ENCODE measurements at regions of chr1 and their contacts with region 1.

Region 1: GRCh38 chr1:203871107-203871875 is 9.9 kb downstream of the SNRPE start:
- DNase-seq: no peak
- ATAC-seq: peak; percentile 85
- H3K4me3 ChIP-seq: no peak overlapping the region
- H3K27ac ChIP-seq: peak overlapping the region; percentile 66
- H3K4me1 ChIP-seq: peaks cover 18% of the 10 kb centered on the region
- H3K27me3 ChIP-seq: no peaks in the 10 kb centered on the region
- CTCF ChIP-seq: peak; percentile 84

Region 2: GRCh38 chr1:203839059-203839458 is 32.2 kb before region 1 on chr1:
- CTCF ChIA-PET with region 1: no interaction called
- POLR2A ChIA-PET with region 1: no interaction called
- in situ Hi-C with region 1: no loop called
- intact Hi-C with region 1: no loop called
- DNase-seq: no peak
- ATAC-seq: no peak
- H3K4me3 ChIP-seq: no peak overlapping the region
- H3K27ac ChIP-seq: no peak overlapping the region
- H3K4me1 ChIP-seq: no peaks in the 10 kb centered on the region
- H3K27me3 ChIP-seq: no peaks in the 10 kb centered on the region
- CTCF ChIP-seq: no peak

Region 3: DNA sequence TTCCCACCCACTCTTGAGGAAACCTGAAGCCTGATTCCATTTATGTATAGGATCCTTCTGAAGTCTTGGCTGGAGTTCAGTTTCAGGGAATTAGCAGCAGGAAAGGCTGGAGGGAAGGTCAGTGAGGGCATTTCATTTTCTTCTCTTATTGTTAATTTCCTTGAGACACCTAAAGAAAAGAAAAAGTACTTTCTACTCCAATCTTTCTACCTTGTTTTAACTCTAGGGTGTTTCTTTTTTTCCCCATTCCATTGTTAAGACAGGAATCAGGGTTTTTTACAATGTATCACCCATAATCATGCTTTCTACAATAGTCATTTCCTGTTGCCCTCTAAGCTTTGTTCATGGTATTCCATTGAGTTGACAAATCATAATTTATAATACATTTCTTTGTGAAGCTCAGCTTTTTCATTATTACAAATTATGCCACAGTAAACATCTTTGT is 17.5 kb after region 1 on chr1:
- CTCF ChIA-PET with region 1: no interaction called
- POLR2A ChIA-PET with region 1: no interaction called
- in situ Hi-C with region 1: no loop called
- intact Hi-C with region 1: no loop called
- DNase-seq: peak; percentile 56
- ATAC-seq: peak; percentile 77
- H3K4me3 ChIP-seq: no peak overlapping the region
- H3K27ac ChIP-seq: peak overlapping the region; percentile 64
- H3K4me1 ChIP-seq: peaks cover 13% of the 10 kb centered on the region
- H3K27me3 ChIP-seq: no peaks in the 10 kb centered on the region
- CTCF ChIP-seq: no peak

Region 4: DNA sequence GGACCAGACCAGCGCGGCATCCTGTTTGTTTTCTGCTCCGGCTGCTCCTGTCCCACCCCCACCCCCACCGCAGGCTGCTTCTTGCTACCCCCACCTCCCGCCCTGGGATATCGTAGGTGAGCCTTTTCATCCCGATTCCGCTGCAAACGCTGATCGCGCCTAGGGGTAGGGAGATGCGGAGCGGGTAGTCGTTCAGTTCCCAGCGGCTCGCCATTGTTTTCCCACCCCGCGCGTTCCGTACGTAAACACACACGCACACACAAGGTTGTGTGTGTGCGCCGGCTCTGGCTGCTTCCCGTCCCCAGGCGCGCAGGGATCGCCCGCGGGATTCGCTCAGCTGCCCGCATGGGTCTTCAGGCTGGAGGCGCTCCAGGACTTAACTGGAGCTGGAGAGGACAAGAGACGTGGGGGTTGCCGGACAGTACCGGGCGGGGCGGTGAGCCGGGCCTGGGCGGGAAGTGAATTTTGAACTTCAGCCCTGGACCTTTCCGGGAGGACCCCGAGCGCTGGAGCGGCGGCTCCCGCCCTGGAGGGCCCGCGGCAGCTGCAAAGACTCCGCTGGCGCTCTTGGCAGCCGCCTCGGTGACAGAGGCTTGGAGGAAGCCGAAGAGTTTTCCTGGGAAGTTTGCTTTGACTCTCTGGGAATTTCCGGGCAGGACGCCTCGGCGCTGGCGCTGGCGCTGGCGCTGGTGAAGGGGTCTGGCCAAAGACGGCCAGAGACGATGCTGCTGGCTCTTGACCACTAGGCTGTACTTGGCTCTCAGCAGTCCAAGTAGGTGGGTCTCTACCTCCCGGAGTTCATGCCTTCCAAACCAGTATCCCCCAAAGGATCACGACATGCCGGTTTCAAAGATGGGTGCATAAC is 203.2 kb after region 1 on chr1:
- CTCF ChIA-PET with region 1: interaction called, 5 read pairs
- POLR2A ChIA-PET with region 1: interaction called, 4 read pairs
- in situ Hi-C with region 1: no loop called
- intact Hi-C with region 1: loop called (anchors 2 kb)
- DNase-seq: no peak
- ATAC-seq: peak; percentile 27
- H3K4me3 ChIP-seq: peak overlapping the region; percentile 80 to 84
- H3K27ac ChIP-seq: peak overlapping the region; percentile 72
- H3K4me1 ChIP-seq: peaks cover 38% of the 10 kb centered on the region
- H3K27me3 ChIP-seq: no peaks in the 10 kb centered on the region
- CTCF ChIP-seq: no peak

Region 5: DNA sequence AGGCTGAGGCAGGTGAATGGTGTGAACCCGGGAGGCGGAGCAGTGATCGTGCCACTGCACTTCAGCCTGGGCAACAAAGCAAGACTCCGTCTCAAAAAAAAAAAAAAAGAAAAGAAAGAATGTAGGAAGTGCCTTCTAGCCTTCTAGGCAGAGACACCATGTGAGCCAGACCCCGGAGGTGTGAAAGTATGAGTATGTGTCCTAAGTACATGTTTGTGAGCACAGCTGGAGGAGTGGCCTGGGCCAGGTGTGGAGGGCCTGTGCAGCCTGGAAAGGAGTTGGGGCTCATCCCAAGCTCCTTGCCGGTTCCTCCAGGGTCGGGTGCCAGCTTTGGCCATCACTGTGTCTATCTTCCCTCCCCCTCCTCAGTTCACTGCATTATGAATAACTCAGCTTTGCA is 214.6 kb after region 1 on chr1:
- CTCF ChIA-PET with region 1: interaction called, 12 read pairs
- POLR2A ChIA-PET with region 1: no interaction called
- in situ Hi-C with region 1: no loop called
- intact Hi-C with region 1: no loop called
- DNase-seq: no peak
- ATAC-seq: no peak
- H3K4me3 ChIP-seq: no peak overlapping the region
- H3K27ac ChIP-seq: no peak overlapping the region
- H3K4me1 ChIP-seq: peaks cover 54% of the 10 kb centered on the region
- H3K27me3 ChIP-seq: no peaks in the 10 kb centered on the region
- CTCF ChIP-seq: no peak

Region 6: GRCh38 chr1:204102029-204102611 is 230.8 kb after region 1 on chr1:
- CTCF ChIA-PET with region 1: no interaction called
- POLR2A ChIA-PET with region 1: no interaction called
- in situ Hi-C with region 1: no loop called
- intact Hi-C with region 1: no loop called
- DNase-seq: no peak
- ATAC-seq: no peak
- H3K4me3 ChIP-seq: no peak overlapping the region
- H3K27ac ChIP-seq: 0 out of 2 replicates have a peak overlapping the region, but pooled peaks have one; percentile 5
- H3K4me1 ChIP-seq: peaks cover 31% of the 10 kb centered on the region
- H3K27me3 ChIP-seq: no peaks in the 10 kb centered on the region
- CTCF ChIP-seq: no peak

Region 7: DNA sequence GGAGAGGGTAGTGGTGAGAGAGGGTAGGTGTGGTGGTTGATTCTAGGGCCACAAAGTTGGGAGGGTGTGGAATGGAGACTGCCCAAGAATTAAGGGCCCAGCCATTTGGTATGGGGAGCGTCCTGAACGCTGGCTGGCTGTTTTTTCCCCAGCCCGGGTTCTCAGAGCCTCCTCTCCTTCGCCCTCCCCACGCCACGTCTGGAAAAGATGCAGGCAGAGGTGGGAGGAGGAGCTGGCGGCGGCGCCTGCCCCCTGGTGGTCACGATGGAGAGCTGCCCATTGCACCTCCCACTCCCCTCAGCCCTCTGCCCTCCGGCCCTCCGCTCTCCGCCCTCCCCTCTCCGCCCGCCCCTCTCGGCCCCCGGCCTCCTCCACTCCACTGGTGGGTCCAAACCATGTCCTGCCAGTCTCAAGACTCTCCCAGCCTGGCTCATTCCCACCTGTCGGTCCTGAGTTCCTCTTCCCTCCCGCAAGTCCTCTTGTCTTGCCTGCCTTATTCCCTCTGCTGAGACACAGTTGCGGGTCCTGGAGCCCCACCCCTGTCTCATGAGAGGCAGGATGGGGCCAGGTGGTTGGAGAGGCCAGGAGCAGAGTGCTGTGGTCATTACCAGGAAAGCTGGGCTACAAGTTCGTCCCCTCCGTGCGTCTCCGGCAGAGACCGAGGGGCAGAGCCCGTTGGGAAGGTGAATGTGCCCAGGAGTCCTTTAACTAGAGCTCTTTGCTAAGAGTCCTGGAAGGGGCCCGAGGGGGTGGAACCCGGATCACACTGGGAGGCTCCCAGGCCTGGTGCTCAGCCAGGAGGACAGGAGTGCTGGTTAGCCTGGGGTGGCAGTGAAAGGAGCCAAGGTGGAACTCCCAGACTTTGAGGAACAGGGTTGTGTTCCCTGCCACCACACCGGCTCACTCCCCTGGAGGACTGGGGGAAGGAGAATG is 257.9 kb after region 1 on chr1:
- CTCF ChIA-PET with region 1: interaction called, 30 read pairs
- POLR2A ChIA-PET with region 1: interaction called, 3 read pairs
- in situ Hi-C with region 1: loop called (anchors 25 kb)
- intact Hi-C with region 1: loop called (anchors 1 kb)
- DNase-seq: no peak
- ATAC-seq: peak; percentile 85
- H3K4me3 ChIP-seq: peak overlapping the region in 1 of 2 experiments; percentile 30; a peak in 1 of 4 replicates
- H3K27ac ChIP-seq: peak overlapping the region; percentile 61
- H3K4me1 ChIP-seq: peaks cover 29% of the 10 kb centered on the region
- H3K27me3 ChIP-seq: no peaks in the 10 kb centered on the region
- CTCF ChIP-seq: peak; percentile 96